Tibial artery (tissue), 4 donors: ENCODE measurements at regions of chr20 and their contacts with region 1.

Region 1: GRCh38 chr20:45373353-45374100 is 4.6 kb downstream of the TP53TG5 start:
- DNase-seq: peak; percentile 89 to 96
- H3K4me3 ChIP-seq: peak overlapping the region; percentile 51 to 61
- H3K27ac ChIP-seq: peak overlapping the region; percentile 87 to 94
- H3K4me1 ChIP-seq: peaks cover 0 to 36% (median 14%) of the 10 kb centered on the region in 4 donors
- H3K27me3 ChIP-seq: no peaks in the 10 kb centered on the region
- CTCF ChIP-seq: peak; percentile 84 to 94

Region 2: GRCh38 chr20:45406259-45407066 is 32.9 kb after region 1 on chr20:
- intact Hi-C with region 1: loop called (anchors 5 kb)
- DNase-seq: peak; percentile 71 to 94
- H3K4me3 ChIP-seq: peak overlapping the region; percentile 92 to 97
- H3K27ac ChIP-seq: peak overlapping the region; percentile 97 to 99
- H3K4me1 ChIP-seq: peaks cover 0 to 44% (median 28%) of the 10 kb centered on the region in 4 donors
- H3K27me3 ChIP-seq: no peaks in the 10 kb centered on the region
- CTCF ChIP-seq: no peak

Region 3: DNA sequence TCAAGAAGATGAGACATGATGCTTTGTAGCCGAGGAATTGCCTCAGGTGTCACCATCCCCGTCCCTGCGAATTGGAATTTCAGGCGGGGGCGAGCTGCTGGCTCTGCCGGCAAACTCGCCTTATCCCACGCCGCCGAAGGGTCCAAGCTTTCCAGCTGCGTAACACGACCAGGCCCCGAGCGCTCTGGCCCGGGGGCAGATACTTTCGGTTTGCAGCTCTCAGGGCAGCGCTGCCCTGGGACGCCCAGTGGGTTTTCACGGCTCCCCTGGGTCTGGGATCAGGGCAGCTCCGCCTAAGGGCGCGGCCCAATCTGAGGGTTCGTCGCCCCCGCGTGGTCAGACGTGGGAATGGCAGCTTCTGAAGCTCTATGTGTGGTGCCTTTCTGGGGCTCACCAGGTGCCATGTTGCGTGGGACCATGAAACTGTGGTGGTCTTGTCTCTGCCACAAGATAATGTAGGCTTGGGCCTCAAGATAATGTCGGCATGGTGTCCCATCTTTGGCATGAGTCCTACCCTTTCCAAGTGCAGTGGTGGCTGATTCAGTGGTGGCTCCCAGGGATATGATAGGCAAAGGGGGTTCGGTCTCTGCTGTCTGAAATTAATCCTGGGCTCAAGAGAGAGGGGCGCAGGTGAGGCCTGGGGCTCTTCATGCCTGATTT is 63.3 kb after region 1 on chr20:
- intact Hi-C with region 1: loop called (anchors 2 kb)
- DNase-seq: peak; percentile 89 to 94
- H3K4me3 ChIP-seq: peak overlapping the region; percentile 55 to 61
- H3K27ac ChIP-seq: peak overlapping the region; percentile 82 to 86
- H3K4me1 ChIP-seq: peaks cover 0 to 13% (median 0%) of the 10 kb centered on the region in 4 donors
- H3K27me3 ChIP-seq: no peaks in the 10 kb centered on the region
- CTCF ChIP-seq: peak; percentile 90 to 96